ENCODE measurements at regions of chr5 and their contacts with region 1.

Region 1: GRCh38 chr5:59810041-59810440 is 83.5 kb downstream of the PDE4D start:
- DNase-seq: peak; percentile 92

Region 2: GRCh38 chr5:59542851-59543820 is 266.9 kb before region 1 on chr5:
- intact Hi-C with region 1: no loop called
- DNase-seq: no peak

Region 3: DNA sequence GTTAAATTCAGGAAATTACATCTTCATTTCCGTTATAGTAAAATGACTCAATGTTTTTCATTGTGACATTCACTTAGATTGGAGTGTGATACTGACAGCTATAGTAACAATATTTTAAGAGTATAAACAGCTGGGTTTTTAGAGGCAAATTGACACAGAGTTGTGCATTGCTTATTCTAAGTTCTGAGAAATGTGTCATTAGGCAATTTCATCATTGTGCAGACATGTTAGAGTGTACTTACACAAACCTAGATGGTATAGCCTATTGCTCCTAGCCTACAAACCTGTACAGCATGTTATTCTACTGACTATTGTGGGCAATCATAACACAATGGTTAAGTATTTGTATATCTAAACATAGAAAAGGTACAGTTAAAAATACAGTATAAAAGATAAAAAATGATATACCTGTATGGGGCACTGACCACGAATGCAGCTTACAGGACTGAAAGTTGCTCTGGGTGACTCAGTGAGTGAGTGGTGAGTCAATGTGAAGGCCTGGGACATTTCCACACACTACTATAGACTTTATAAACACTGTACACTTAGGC is 49.2 kb before region 1 on chr5:
- intact Hi-C with region 1: no loop called
- DNase-seq: no peak

Region 4: GRCh38 chr5:60287174-60287771 is 477.2 kb after region 1 on chr5:
- intact Hi-C with region 1: loop called in 1 of 2 experiments (anchors 10 kb)
- DNase-seq: peak; percentile 78

Region 5: DNA sequence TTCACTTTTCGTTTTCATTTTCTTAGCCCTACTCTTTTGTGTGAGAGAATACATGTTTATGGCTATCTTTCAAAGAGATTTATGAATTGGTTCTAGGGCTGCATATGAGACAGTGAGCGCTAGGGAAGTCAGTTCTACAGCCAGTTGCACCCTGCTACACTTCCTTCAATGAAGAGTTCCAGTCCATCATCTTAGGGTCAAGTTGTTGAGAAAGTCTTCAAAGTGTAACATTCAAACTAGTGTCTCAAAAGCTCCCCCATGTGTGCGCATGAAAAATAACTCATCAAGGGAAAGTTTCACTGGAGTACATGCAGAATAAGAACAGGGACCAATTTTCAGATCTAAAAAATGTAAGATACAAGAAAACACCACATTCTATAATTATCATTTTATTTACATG is 572.7 kb after region 1 on chr5:
- intact Hi-C with region 1: loop called (anchors 5 to 10 kb)
- DNase-seq: no peak

Region 6: GRCh38 chr5:60668686-60669304 is 858.8 kb after region 1 on chr5:
- intact Hi-C with region 1: loop called (anchors 10 kb)
- DNase-seq: no peak

Region 7: GRCh38 chr5:60677844-60678664 is 868.0 kb after region 1 on chr5:
- intact Hi-C with region 1: loop called in 1 of 2 experiments (anchors 10 kb)
- DNase-seq: no peak